Dendritic cell treated with granulocyte-macrophage colony-stimulating factor and Interleukin-4, amounts not matched to agents 40 ng/mL and 50 ng/mL, for 4 days (primary cell): ENCODE measurements at regions of chr14 and their contacts with region 1.

Region 1: GRCh38 chr14:90681929-90682328 is 134.3 kb downstream of the TTC7B start:
- H3K4me3 Mint-ChIP-seq: no peak overlapping the region
- H3K27ac Mint-ChIP-seq: no peak overlapping the region
- H3K4me1 Mint-ChIP-seq: peaks cover 42% of the 10 kb centered on the region
- H3K27me3 Mint-ChIP-seq: no peaks in the 10 kb centered on the region

Region 2: DNA sequence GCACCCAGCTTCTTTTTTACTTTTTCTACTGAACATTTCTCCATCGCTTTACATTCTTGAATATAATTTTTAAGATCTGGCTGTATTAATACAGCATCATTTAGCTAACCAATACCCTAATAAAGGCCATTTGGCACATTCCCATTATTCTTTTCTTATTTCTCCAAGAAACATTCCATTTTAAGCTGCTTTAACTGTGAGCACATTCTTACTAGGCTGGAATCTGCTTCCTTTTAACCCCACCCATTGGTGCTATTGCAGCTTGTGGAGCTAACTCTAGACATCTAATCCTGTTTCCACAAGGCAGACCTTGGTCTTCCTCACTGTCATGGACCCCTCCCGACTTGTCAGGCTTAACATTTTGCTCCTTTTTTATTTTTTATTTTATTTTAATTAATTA is 269.9 kb before region 1 on chr14:
- intact Hi-C with region 1: loop called (anchors 5 kb)
- H3K4me3 Mint-ChIP-seq: no peak overlapping the region
- H3K27ac Mint-ChIP-seq: no peak overlapping the region
- H3K4me1 Mint-ChIP-seq: peaks cover 6% of the 10 kb centered on the region
- H3K27me3 Mint-ChIP-seq: peaks cover 3% of the 10 kb centered on the region

Region 3: GRCh38 chr14:90556012-90556477 is 125.9 kb before region 1 on chr14:
- intact Hi-C with region 1: no loop called
- H3K4me3 Mint-ChIP-seq: no peak overlapping the region
- H3K27ac Mint-ChIP-seq: no peak overlapping the region
- H3K4me1 Mint-ChIP-seq: peaks cover 50% of the 10 kb centered on the region
- H3K27me3 Mint-ChIP-seq: peaks cover 6% of the 10 kb centered on the region